CD4-positive, alpha-beta T cell (primary cell): ENCODE measurements at regions of chr18 and their contacts with region 1.

Region 1: DNA sequence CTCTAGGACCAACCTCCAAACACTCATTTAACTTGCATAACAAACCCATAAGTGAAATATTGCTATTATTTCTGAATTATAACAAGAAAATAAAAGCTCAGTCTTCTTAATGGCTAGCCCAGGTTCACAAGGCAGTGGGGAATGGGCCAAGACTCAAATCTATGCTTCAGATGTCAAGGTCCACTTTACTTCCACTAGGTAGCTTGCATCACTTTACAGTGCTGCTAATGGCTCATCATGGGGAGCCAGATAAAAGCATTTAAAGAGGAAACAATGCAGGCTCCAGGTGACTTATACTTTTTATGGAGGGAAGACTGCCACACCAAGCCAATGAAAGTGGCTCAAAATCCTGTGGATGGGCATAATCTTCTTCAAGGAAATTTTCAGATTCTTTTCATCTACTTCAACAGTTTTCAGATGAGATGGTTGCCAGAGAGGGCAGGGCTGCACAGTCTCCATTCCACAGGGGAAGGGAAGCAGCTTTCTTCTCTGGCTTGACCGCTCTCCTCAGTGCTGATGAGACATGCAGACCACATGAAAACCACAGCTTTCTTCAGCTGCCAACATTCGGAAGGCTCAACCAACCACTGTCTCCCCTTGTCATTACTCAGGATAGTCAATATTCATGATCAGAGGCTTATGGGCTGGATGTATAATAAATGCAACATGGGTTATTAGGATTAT is 361.9 kb upstream of the MEX3C start:
- DNase-seq: no peak
- ATAC-seq: no peak
- H3K4me3 ChIP-seq: no peak overlapping the region
- H3K4me3 Mint-ChIP-seq: no peak overlapping the region
- H3K27ac ChIP-seq: no peak overlapping the region
- H3K27ac Mint-ChIP-seq: no peak overlapping the region
- H3K4me1 ChIP-seq: no peaks in the 10 kb centered on the region
- H3K4me1 Mint-ChIP-seq: no peaks in the 10 kb centered on the region
- H3K27me3 ChIP-seq: peaks cover 0 to 6% of the 10 kb centered on the region in 2 experiments
- H3K27me3 Mint-ChIP-seq: peaks cover 22% of the 10 kb centered on the region
- CTCF ChIP-seq: no peak

Region 2: GRCh38 chr18:51300912-51301311 is 258.4 kb before region 1 on chr18:
- CTCF ChIA-PET with region 1: no interaction called
- POLR2A ChIA-PET with region 1: no interaction called
- intact Hi-C with region 1: no loop called
- DNase-seq: no peak
- ATAC-seq: no peak
- H3K4me3 ChIP-seq: no peak overlapping the region
- H3K4me3 Mint-ChIP-seq: no peak overlapping the region
- H3K27ac ChIP-seq: no peak overlapping the region
- H3K27ac Mint-ChIP-seq: no peak overlapping the region
- H3K4me1 ChIP-seq: no peaks in the 10 kb centered on the region
- H3K4me1 Mint-ChIP-seq: no peaks in the 10 kb centered on the region
- H3K27me3 ChIP-seq: no peaks in the 10 kb centered on the region
- H3K27me3 Mint-ChIP-seq: peaks cover 33% of the 10 kb centered on the region
- CTCF ChIP-seq: no peak

Region 3: DNA sequence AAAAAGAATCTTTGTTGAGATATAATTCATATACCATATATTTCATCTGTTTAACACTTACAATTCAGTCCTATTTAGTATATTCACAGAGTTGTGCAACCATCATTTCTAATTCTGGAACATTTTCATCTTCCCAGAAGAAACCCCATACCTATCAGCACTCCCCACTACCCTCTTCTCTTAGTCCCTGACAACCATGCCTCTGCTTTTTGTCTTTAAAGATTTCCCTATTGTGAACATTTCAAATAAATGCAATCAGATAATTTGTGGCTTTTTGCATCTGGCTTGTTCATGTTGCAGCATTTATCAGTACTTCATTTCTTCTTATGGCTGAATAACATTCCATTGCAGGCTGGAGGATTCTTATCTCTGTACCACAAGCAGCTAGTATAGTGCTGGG is 56.0 kb before region 1 on chr18:
- CTCF ChIA-PET with region 1: no interaction called
- POLR2A ChIA-PET with region 1: no interaction called
- intact Hi-C with region 1: loop called in 1 of 2 experiments (anchors 5 kb)
- DNase-seq: no peak
- ATAC-seq: no peak
- H3K4me3 ChIP-seq: no peak overlapping the region
- H3K4me3 Mint-ChIP-seq: no peak overlapping the region
- H3K27ac ChIP-seq: no peak overlapping the region
- H3K27ac Mint-ChIP-seq: no peak overlapping the region
- H3K4me1 ChIP-seq: no peaks in the 10 kb centered on the region
- H3K4me1 Mint-ChIP-seq: no peaks in the 10 kb centered on the region
- H3K27me3 ChIP-seq: no peaks in the 10 kb centered on the region
- H3K27me3 Mint-ChIP-seq: peaks cover 6% of the 10 kb centered on the region
- CTCF ChIP-seq: no peak

Region 4: GRCh38 chr18:51897884-51898283 is 338.5 kb after region 1 on chr18:
- CTCF ChIA-PET with region 1: no interaction called
- POLR2A ChIA-PET with region 1: no interaction called
- intact Hi-C with region 1: no loop called
- DNase-seq: no peak
- ATAC-seq: no peak
- H3K4me3 ChIP-seq: no peak overlapping the region
- H3K4me3 Mint-ChIP-seq: no peak overlapping the region
- H3K27ac ChIP-seq: no peak overlapping the region
- H3K27ac Mint-ChIP-seq: no peak overlapping the region
- H3K4me1 ChIP-seq: no peaks in the 10 kb centered on the region
- H3K4me1 Mint-ChIP-seq: no peaks in the 10 kb centered on the region
- H3K27me3 ChIP-seq: no peaks in the 10 kb centered on the region
- H3K27me3 Mint-ChIP-seq: no peaks in the 10 kb centered on the region
- CTCF ChIP-seq: no peak